AG04450 (cell line): ENCODE measurements at regions of chr3 and their contacts with region 1.

Region 1: GRCh38 chr3:53303957-53304356 is 43.4 kb downstream of the DCP1A start:
- DNase-seq: no peak
- H3K4me3 ChIP-seq: no peak overlapping the region
- H3K27ac ChIP-seq: no peak overlapping the region
- H3K27me3 ChIP-seq: no peaks in the 10 kb centered on the region
- CTCF ChIP-seq: no peak

Region 2: GRCh38 chr3:53287131-53287629 is 16.8 kb before region 1 on chr3:
- CTCF ChIA-PET with region 1: interaction called, 14 read pairs
- POLR2A ChIA-PET with region 1: no interaction called
- DNase-seq: peak; percentile 15
- H3K4me3 ChIP-seq: no peak overlapping the region
- H3K27ac ChIP-seq: no peak overlapping the region
- H3K27me3 ChIP-seq: no peaks in the 10 kb centered on the region
- CTCF ChIP-seq: no peak

Region 3: GRCh38 chr3:53347261-53348064 is 43.5 kb after region 1 on chr3 and contains the start of gene DCP1A:
- CTCF ChIA-PET with region 1: interaction called, 22 read pairs
- POLR2A ChIA-PET with region 1: interaction called, 11 read pairs
- DNase-seq: peak; percentile 92
- H3K4me3 ChIP-seq: peak within 1 kb of the TSS; percentile 99
- H3K27ac ChIP-seq: peak within 1 kb of the TSS; percentile 95
- H3K27me3 ChIP-seq: no peaks in the 10 kb centered on the region
- CTCF ChIP-seq: no peak
- polyA plus RNA-seq, gene DCP1A: 23.5 and 27.0 TPM in 2 replicates